ENCODE measurements at regions of chr13 and their contacts with region 1.

Region 1: GRCh38 chr13:107124129-107124718 is 556.3 kb upstream of the ARGLU1 start:
- DNase-seq: no peak

Region 2: DNA sequence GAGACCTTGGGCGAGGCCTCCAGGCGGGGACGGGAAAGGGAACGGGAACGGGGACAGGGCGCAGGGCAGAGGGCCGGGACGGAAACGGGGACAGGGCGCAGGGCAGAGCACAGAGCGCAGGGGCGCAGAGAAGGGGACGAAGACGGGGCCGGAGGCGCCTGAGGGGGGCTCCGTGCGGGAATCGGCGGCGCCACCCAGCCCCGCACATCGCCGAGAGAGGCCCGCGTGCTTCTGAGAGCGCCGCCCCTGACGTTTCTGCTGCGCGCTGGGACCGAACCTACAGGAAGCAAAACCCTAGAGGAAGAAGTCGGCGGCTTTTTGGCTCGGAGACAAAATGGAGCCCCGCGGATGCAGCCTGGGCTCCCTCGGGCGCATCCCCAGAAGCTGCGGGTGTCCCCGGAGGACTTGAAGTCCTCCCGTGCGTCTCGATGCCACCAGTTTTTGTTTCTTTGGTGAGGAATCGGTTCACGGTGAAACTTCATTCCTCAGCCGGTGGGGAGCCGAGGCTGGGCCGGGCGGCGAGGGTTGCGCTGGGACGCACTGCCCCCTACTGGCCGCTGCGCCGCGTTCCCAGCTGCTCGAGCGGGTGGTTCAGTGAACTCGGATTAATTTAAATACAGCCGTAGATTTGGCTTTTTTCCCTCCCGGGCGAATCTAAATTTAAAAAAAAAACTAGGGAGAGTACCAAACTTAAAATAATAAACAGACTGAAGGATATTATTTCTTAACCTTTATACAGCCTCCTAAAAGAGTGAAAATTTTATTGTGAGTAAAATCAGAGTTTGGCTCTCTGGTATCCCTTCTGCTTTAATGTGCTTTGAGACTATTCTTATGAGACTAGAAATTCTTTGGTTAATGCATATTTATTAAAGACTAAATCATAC is 206.3 kb before region 1 on chr13:
- intact Hi-C with region 1: loop called (anchors 10 kb)
- DNase-seq: peak; percentile 94

Region 3: GRCh38 chr13:107144432-107144831 is 20.2 kb after region 1 on chr13:
- intact Hi-C with region 1: no loop called
- DNase-seq: no peak